ENCODE measurements at regions of chr3 and their contacts with region 1.

Region 1: DNA sequence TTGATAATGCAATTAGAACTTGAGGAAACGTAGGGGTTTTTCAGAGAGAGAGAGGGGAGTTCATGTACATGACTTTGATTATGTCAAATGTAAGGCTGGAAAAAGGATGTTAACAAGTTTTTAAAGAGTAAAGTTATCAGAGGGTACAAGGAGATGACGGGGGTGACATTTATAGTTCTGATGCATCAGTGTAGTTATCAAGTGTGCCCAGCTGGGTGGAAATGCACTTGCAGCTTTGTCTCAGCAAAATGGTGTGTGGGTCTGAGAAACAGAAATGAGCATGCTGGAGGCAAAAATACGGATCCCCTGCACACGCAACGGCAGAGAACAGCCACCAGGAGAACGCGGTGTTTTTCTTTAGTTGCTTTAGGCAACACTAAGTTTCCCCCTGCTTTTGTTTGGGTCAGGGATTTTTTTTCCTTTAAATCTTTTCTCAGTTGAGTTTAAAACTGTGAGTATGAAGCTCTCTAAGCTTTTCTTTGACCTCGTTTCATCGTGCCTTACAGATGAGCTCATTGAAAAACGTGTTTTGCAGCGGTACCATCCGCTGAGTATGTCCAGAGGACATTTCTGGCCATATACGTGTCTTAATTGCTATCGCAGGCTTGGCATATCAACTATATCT is 205.4 kb downstream of the PDZRN3 start:
- DNase-seq: no peak
- H3K4me3 ChIP-seq: no peak overlapping the region
- H3K27ac ChIP-seq: no peak overlapping the region
- H3K4me1 ChIP-seq: no peaks in the 10 kb centered on the region; a peak in 2 of 7 replicates
- H3K27me3 ChIP-seq: no peaks in the 10 kb centered on the region
- CTCF ChIP-seq: peak; percentile 29 to 70 (median 69); a peak in 3 of 4 replicates
- EP300 ChIP-seq: no peak
- POLR2A ChIP-seq: no peak
- RAD21 ChIP-seq: peak; percentile 29 to 38; a peak in 3 of 4 replicates

Region 2: DNA sequence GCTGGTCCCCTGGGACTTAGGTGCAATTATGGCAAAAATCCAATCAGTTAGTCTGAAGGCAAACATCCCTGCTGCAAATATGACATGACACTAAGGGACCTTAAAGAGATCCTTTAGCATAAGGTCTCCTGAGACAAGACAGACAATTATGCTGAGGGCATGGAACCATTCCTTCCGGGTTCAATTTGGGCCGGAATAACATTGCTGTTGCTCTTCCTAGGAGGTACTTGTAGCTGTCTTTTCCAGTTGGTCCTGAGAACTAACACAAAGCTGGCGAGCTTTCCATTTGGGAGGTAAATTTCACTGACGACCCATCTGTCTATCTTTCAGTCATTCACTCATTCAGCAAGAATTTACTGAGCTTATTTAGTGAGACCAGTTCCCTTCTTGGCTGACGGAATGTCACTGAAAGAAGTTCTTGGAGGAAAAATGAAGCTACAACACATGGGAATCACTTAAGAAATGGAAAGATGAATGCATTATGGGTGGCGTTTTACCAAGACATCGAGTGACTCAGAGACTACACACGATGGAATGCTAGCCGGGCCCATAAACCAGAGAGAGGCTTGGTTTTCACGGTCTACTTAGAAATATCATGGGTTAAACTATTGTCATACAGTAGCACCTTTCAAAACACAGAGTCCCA is 10.1 kb before region 1 on chr3:
- CTCF ChIA-PET with region 1: interaction called, 13 read pairs
- POLR2A ChIA-PET with region 1: no interaction called
- DNase-seq: no peak
- H3K4me3 ChIP-seq: no peak overlapping the region
- H3K27ac ChIP-seq: no peak overlapping the region
- H3K4me1 ChIP-seq: peaks cover 0 to 3% (median 0%) of the 10 kb centered on the region in 4 experiments; a peak in 1 of 7 replicates
- H3K27me3 ChIP-seq: no peaks in the 10 kb centered on the region
- CTCF ChIP-seq: no peak
- EP300 ChIP-seq: no peak
- POLR2A ChIP-seq: no peak
- RAD21 ChIP-seq: no peak

Region 3: DNA sequence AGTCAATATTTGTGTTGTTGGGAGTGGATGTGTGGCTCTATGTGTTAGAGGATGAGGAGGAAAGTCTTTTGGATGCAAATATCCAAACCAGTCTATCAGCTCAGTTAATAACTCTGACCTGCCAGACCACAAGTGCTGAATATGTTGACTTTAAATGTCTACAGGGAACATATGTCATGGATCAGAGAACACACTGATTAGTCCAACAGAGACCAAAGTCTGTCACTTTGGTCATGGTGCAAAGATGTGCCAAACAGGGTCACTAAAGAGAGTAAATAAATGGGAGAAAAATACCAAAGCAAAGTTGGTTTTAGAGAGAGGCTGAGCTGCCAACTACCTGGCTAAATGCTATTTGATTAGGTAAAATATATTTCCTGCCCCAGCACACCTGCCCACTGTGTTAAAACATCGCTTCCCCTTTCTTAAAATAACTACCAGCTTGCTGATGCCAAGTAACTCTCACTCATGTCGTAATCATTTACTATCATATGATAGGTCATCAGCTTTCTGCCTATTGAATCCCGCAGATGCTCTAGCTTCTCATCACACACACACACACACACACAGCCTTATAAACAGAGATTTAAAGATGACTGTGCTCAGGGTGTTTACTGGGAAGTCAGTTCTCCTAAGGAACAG is 32.1 kb after region 1 on chr3:
- CTCF ChIA-PET with region 1: interaction called, 20 read pairs
- POLR2A ChIA-PET with region 1: no interaction called
- DNase-seq: no peak
- H3K4me3 ChIP-seq: no peak overlapping the region
- H3K27ac ChIP-seq: no peak overlapping the region
- H3K4me1 ChIP-seq: peaks cover 0 to 10% (median 7%) of the 10 kb centered on the region in 4 experiments; a peak in 3 of 7 replicates
- H3K27me3 ChIP-seq: no peaks in the 10 kb centered on the region
- CTCF ChIP-seq: no peak
- EP300 ChIP-seq: no peak
- POLR2A ChIP-seq: no peak
- RAD21 ChIP-seq: no peak

Measured in H1 (cell line).